IMR-90 (cell line): ENCODE measurements at regions of chr4 and their contacts with region 1.

Region 1: DNA sequence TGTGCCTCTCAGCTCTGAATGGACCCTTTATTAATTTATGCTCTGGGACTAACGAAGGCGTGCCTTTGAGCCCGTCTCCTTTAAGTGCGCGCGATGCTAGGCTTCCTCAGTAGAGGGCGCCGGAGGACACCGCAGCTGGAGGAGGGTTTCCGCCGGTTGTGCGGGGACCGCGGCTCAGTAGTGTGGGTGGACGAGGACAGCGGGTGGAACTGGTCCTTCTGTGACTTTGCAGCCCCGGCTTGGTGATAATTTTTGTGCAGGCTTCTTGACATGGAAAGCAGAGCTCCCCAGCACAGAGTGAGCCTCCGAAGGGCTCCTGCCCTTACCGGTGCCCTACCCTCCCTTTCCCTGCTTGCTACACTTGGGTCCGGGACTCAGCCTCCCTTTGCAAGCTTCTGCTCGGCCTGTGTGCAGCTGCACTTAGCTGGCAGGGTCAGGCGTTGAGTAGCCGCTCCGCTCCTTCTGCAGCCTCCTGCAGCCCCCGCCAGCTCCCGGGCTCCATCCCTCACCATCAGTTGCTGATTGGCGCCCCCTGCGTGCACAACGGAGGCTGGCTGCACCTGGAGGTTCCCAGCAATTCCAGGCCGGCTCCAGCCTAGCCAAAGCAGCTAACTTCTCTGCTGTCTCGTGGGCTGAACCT is 26.8 kb upstream of the BOD1L1 start:
- DNase-seq: peak; percentile 68
- ATAC-seq: peak; percentile 97
- H3K4me3 ChIP-seq: peak overlapping the region; percentile 50
- H3K27ac ChIP-seq: peak overlapping the region; percentile 20
- H3K4me1 ChIP-seq: peaks cover 2% of the 10 kb centered on the region; the same call in 1 of the 2 replicates
- H3K27me3 ChIP-seq: no peaks in the 10 kb centered on the region
- CTCF ChIP-seq: peak; percentile 93
- POLR2A ChIP-seq: no peak
- RAD21 ChIP-seq: peak; percentile 81

Region 2: DNA sequence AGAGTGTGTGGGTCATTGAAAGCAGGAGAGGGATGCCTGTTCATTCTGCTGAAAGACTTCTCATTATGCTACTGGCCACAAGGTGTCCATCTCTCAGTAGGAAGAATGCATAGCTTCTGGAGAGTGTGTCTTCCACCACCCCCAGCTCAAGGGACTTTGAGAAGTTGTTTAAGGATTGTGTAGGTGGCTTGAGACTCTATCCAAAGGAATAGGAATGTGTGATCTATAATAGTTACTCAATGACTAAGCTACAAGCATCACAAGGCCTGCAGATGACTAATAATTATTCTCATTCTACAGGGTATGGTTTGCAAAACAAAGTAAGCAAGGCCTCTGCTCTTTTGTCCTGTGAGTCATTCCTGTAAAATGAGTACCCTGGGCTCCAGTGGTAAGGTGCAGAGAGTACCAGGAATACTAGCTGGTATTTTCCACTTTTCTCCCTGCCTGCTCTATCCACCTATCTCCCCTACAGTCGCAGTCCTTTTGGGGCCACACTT is 253.0 kb after region 1 on chr4:
- CTCF ChIA-PET with region 1: interaction called, 8 read pairs
- POLR2A ChIA-PET with region 1: no interaction called
- dilution Hi-C with region 1: no loop called
- in situ Hi-C with region 1: loop called (anchors 25 kb)
- intact Hi-C with region 1: loop called (anchors 5 kb)
- DNase-seq: peak; percentile 99
- ATAC-seq: peak; percentile 87
- H3K4me3 ChIP-seq: no peak overlapping the region
- H3K27ac ChIP-seq: peak overlapping the region; percentile 98
- H3K4me1 ChIP-seq: peaks cover 15% of the 10 kb centered on the region
- H3K27me3 ChIP-seq: no peaks in the 10 kb centered on the region
- CTCF ChIP-seq: peak; percentile 60
- POLR2A ChIP-seq: peak; percentile 52; the same call in 1 of the 2 replicates
- RAD21 ChIP-seq: peak; percentile 81

Region 3: DNA sequence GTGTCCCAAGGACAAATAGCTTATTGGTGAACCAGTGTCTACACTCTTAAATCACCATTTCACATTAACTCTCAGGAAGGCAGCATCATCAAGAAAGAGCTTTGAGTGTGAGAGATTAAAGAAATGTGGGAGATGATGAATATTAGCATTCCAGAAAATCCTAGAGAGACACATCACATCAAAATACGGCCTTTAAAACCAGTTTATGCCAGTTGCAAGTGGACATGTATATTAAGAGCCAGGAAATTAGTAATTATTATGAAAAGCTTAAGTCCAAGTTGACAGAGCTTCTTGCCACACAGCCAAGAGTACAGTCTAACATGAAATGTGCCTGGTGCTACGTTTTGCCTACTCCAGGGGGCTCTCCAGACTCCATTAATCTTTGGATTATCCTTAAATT is 476.3 kb after region 1 on chr4:
- CTCF ChIA-PET with region 1: no interaction called
- POLR2A ChIA-PET with region 1: no interaction called
- dilution Hi-C with region 1: no loop called
- in situ Hi-C with region 1: no loop called
- intact Hi-C with region 1: loop called (anchors 10 kb)
- DNase-seq: peak; percentile 58
- ATAC-seq: peak; percentile 72
- H3K4me3 ChIP-seq: no peak overlapping the region
- H3K27ac ChIP-seq: no peak overlapping the region
- H3K4me1 ChIP-seq: peaks cover 6% of the 10 kb centered on the region; the same call in 1 of the 2 replicates
- H3K27me3 ChIP-seq: no peaks in the 10 kb centered on the region
- CTCF ChIP-seq: 0 out of 2 replicates have a peak, but pooled peaks have one; percentile 5
- POLR2A ChIP-seq: no peak
- RAD21 ChIP-seq: no peak

Region 4: DNA sequence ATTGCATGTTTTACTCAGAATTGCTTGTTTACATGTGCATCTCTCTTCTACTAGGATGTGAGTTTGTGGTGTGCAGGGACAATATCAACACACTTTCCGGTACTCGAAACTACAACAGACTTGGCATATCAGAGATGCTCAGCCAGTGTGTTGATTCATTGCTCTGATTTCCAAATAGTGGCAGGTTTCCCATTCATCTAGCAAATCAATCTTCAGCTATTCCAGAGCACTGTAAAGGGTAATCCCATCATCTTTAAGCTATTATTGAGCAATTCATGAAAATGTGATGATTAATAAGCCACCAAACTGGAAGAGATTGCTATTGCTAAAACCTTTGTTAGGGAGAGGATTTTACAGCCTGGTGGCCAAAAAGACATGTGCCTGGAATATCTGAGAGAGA is 773.8 kb after region 1 on chr4:
- CTCF ChIA-PET with region 1: no interaction called
- POLR2A ChIA-PET with region 1: no interaction called
- dilution Hi-C with region 1: no loop called
- in situ Hi-C with region 1: no loop called
- intact Hi-C with region 1: loop called (anchors 5 kb)
- DNase-seq: no peak
- ATAC-seq: no peak
- H3K4me3 ChIP-seq: no peak overlapping the region
- H3K27ac ChIP-seq: no peak overlapping the region
- H3K4me1 ChIP-seq: no peaks in the 10 kb centered on the region
- H3K27me3 ChIP-seq: no peaks in the 10 kb centered on the region
- CTCF ChIP-seq: no peak
- POLR2A ChIP-seq: no peak
- RAD21 ChIP-seq: no peak

Region 5: DNA sequence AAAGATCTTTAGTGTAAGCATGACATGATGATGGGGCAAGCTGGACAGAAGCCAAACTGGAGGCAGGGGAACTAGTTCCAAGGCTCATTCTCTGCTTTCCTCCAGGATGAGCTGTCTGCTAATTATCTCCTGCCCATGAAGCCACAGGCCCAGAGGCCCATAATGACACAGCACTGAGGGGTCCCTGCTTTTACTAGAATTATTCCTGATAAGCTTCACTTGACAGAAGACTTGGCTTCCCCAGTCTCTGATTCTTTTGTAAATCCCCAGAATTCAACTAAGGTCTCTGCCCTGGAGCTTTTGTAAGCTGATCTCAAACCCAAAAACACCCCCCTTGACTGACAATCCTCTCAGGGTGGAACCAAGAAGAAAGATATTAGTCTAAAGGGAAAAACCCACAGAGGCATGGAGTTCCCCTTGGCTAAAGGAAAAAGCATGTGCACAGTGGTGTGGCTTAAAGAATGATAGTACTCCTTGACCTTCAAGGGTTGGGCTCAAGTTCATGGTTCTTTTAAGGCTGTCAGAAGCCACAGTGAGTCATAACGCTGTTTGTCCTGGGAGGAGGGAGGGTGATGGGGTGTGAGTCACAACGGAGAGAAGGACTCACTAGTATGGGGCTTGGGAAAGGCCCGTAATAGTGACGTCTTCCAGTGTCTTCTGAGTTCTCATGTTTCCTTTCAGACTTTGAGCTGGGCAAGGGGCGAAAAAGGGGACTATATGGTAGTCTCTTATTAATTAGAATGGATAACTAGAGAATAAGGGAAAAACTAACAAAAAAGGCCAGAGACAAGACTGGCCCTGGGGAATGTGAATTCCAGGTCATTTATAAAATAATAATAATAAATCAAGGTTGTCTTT is 1202.0 kb after region 1 on chr4:
- CTCF ChIA-PET with region 1: no interaction called
- POLR2A ChIA-PET with region 1: no interaction called
- dilution Hi-C with region 1: no loop called
- in situ Hi-C with region 1: no loop called
- intact Hi-C with region 1: loop called (anchors 10 kb)
- DNase-seq: peak; percentile 100
- ATAC-seq: peak; percentile 97
- H3K4me3 ChIP-seq: no peak overlapping the region
- H3K27ac ChIP-seq: peak overlapping the region; percentile 53
- H3K4me1 ChIP-seq: peaks cover 5% of the 10 kb centered on the region
- H3K27me3 ChIP-seq: no peaks in the 10 kb centered on the region; the same call in 1 of the 2 replicates
- CTCF ChIP-seq: no peak
- POLR2A ChIP-seq: no peak
- RAD21 ChIP-seq: no peak